CD8-positive, alpha-beta memory T cell (primary cell): ENCODE measurements at regions of chr3 and their contacts with region 1.

Region 1: GRCh38 chr3:129160891-129161859 is at the start of gene ISY1:
- DNase-seq: peak; percentile 80 to 93 (median 91)
- H3K4me3 ChIP-seq: peak within 1 kb of the TSS; percentile 98
- H3K4me3 Mint-ChIP-seq: peak within 1 kb of the TSS; percentile 95 to 99 (median 98)
- H3K27ac ChIP-seq: peak within 1 kb of the TSS; percentile 95
- H3K27ac Mint-ChIP-seq: peak within 1 kb of the TSS; percentile 97 to 100 (median 99)
- H3K4me1 ChIP-seq: peaks cover 21% of the 10 kb centered on the region
- H3K4me1 Mint-ChIP-seq: peaks cover 31 to 53% (median 42%) of the 10 kb centered on the region in 3 donors
- H3K27me3 ChIP-seq: no peaks in the 10 kb centered on the region
- H3K27me3 Mint-ChIP-seq: peaks cover 0 to 4% of the 10 kb centered on the region in 2 donors
- total RNA-seq, gene ISY1: 84.6 to 94.7 TPM

Region 2: DNA sequence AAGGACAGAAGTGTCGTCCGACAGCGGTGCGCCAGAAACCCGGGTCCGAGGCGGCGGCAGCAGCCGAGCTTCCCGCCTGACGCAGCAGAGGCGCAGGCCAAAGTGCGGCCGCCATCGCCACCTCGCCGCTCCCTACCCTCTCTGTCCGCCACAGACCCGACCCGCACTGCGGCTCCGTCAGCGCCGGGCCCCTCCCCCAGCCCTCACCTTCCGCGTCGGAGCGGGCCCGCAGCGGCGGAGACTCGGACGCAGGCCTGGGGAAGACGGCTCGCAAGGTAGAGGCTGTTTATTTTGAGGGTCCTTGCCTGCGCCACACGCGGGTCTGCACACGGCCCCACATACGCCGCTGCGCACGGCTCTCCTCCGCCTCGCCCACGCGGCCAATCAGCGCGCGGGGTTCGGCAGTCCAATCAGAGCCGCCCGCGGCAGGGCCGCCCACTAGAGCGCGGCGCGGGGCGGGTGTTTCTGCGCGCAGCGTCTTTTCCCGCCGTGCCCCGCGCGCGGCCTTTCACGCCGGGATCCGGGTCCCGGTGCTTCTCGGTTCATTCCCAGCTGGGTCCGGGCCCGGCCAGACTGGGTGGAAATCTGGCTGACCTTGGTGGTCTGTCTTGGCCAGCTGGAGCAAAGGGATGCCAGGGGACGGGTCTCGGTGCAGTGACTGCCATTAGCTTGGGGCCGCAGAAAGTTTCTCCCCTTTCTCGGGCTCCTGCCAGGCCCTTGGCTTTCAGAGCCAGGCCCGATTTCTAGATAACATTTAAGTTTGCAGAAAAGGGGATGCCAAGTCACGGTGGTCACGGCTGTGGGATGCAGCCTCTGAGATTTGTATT is 22.6 kb after region 1 on chr3 and contains the start of gene CNBP:
- CTCF ChIA-PET with region 1: interaction called, 10 read pairs
- POLR2A ChIA-PET with region 1: interaction called, 20 read pairs
- DNase-seq: peak; percentile 87 to 95 (median 93)
- H3K4me3 ChIP-seq: peak within 1 kb of the TSS; percentile 83
- H3K4me3 Mint-ChIP-seq: peak within 1 kb of the TSS; percentile 96 to 99 (median 97)
- H3K27ac ChIP-seq: peak within 1 kb of the TSS; percentile 98
- H3K27ac Mint-ChIP-seq: peak within 1 kb of the TSS; percentile 96 to 99 (median 98)
- H3K4me1 ChIP-seq: peaks cover 30% of the 10 kb centered on the region
- H3K4me1 Mint-ChIP-seq: peaks cover 38 to 49% (median 46%) of the 10 kb centered on the region in 3 donors
- H3K27me3 ChIP-seq: no peaks in the 10 kb centered on the region
- H3K27me3 Mint-ChIP-seq: no peaks in the 10 kb centered on the region
- total RNA-seq, gene CNBP: 474 to 487 TPM

Region 3: DNA sequence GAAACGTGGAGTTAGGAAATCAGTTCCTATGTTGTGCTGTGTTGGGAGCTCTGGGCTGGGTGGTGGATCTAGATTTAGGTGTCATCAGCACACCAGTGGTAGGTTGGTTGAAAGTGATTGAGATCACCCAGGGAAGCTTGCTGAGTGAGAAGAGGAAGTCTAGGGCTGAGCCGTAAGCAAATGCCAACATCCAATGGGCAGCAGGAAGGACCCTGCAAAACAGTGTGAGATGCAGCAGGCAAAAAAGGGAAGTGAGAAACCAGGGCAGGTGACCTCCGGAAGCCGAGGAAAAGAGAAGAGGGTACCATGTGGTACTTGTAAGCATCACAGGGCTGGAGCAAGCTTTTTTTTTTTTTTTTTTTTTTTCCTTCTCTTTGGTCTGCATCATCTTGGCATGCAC is 72.4 kb after region 1 on chr3:
- CTCF ChIA-PET with region 1: no interaction called
- POLR2A ChIA-PET with region 1: no interaction called
- DNase-seq: no peak
- H3K4me3 ChIP-seq: no peak overlapping the region
- H3K4me3 Mint-ChIP-seq: no peak overlapping the region
- H3K27ac ChIP-seq: no peak overlapping the region
- H3K27ac Mint-ChIP-seq: peak overlapping the region in 1 of 8 donors; percentile 62
- H3K4me1 ChIP-seq: peaks cover under 1% of the 10 kb centered on the region
- H3K4me1 Mint-ChIP-seq: peaks cover 3 to 5% (median 4%) of the 10 kb centered on the region in 3 donors
- H3K27me3 ChIP-seq: no peaks in the 10 kb centered on the region
- H3K27me3 Mint-ChIP-seq: no peaks in the 10 kb centered on the region

Region 4: DNA sequence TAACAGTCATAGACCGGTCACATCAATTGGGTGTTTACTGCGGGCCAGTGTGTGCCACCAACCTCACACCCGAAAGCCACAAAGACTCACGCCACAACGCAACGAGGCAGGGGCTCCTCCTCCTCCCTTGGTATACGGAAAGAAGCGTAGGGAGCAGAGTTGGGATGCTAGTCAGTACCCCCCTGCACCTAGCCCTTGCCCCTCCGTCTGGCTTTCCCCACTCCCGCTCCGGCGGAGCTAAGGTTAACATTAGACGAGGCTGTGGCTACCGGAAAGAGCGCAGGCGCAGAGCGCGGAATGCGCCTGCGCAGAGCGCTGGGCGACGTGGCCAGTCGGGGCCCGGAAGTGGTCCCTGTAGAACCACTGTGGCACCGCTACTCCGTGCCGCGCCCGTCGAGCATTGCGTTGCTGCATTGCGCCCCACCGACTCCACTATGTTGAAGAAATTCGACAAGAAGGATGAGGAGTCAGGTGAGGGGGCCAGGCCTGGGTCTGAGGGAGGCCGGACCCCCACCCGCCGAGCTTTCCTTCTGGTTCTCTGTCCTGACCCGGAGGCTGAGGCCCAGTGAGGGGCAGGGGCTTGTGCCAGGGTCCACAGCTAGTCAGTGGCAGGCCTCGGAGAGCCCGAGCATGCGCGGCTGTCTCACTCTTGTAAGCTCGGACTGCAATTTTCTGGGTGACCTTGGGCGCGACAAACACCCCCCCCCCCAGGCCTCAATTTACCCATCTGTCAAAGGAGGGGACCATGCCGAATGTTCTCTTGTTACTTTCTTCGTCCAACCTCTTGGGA is 88.3 kb after region 1 on chr3 and contains the start of gene COPG1:
- CTCF ChIA-PET with region 1: interaction called, 12 read pairs
- POLR2A ChIA-PET with region 1: no interaction called
- DNase-seq: peak; percentile 77 to 91 (median 88)
- H3K4me3 ChIP-seq: peak within 1 kb of the TSS; percentile 100
- H3K4me3 Mint-ChIP-seq: peak within 1 kb of the TSS; percentile 96 to 100 (median 97)
- H3K27ac ChIP-seq: peak within 1 kb of the TSS; percentile 97
- H3K27ac Mint-ChIP-seq: peak within 1 kb of the TSS; percentile 95 to 100 (median 98)
- H3K4me1 ChIP-seq: peaks cover 25% of the 10 kb centered on the region
- H3K4me1 Mint-ChIP-seq: peaks cover 37 to 55% (median 42%) of the 10 kb centered on the region in 3 donors
- H3K27me3 ChIP-seq: no peaks in the 10 kb centered on the region
- H3K27me3 Mint-ChIP-seq: peaks cover 0 to 2% of the 10 kb centered on the region in 2 donors
- total RNA-seq, gene COPG1: 134 to 136 TPM